ENCODE measurements at regions of chr7 and their contacts with region 1.

Region 1: GRCh38 chr7:22559829-22560489 is 60.0 kb upstream of the STEAP1B start:
- DNase-seq: peak; percentile 24 to 77 (median 57)
- ATAC-seq: peak; percentile 88
- H3K4me3 ChIP-seq: no peak overlapping the region
- H3K4me3 Mint-ChIP-seq: no peak overlapping the region
- H3K27ac ChIP-seq: no peak overlapping the region
- H3K27ac Mint-ChIP-seq: no peak overlapping the region
- H3K4me1 ChIP-seq: peaks cover 22% of the 10 kb centered on the region
- H3K4me1 Mint-ChIP-seq: peaks cover 26% of the 10 kb centered on the region
- H3K27me3 ChIP-seq: peaks cover 0 to 4% of the 10 kb centered on the region in 2 experiments
- H3K27me3 Mint-ChIP-seq: peaks cover 18% of the 10 kb centered on the region
- CTCF ChIP-seq: peak; percentile 63

Region 2: GRCh38 chr7:22726345-22727185 is 166.6 kb after region 1 on chr7:
- CTCF ChIA-PET with region 1: interaction called, 95 read pairs
- POLR2A ChIA-PET with region 1: no interaction called
- intact Hi-C with region 1: loop called (anchors 1 kb)
- DNase-seq: peak in 7 of 9 experiments; percentile 6 to 64 (median 38)
- ATAC-seq: peak; percentile 83
- H3K4me3 ChIP-seq: no peak overlapping the region
- H3K4me3 Mint-ChIP-seq: peak overlapping the region; percentile 64
- H3K27ac ChIP-seq: no peak overlapping the region
- H3K27ac Mint-ChIP-seq: no peak overlapping the region
- H3K4me1 ChIP-seq: peaks cover 9% of the 10 kb centered on the region
- H3K4me1 Mint-ChIP-seq: peaks cover 22% of the 10 kb centered on the region
- H3K27me3 ChIP-seq: peaks cover 0 to 14% of the 10 kb centered on the region in 2 experiments
- H3K27me3 Mint-ChIP-seq: peaks cover 33% of the 10 kb centered on the region
- CTCF ChIP-seq: no peak

Region 3: GRCh38 chr7:22782616-22783232 is 222.8 kb after region 1 on chr7:
- CTCF ChIA-PET with region 1: interaction called, 12 read pairs
- POLR2A ChIA-PET with region 1: no interaction called
- intact Hi-C with region 1: loop called (anchors 1 to 5 kb)
- DNase-seq: peak; percentile 45 to 75 (median 65)
- ATAC-seq: peak; percentile 67
- H3K4me3 ChIP-seq: no peak overlapping the region
- H3K4me3 Mint-ChIP-seq: no peak overlapping the region
- H3K27ac ChIP-seq: no peak overlapping the region
- H3K27ac Mint-ChIP-seq: no peak overlapping the region
- H3K4me1 ChIP-seq: no peaks in the 10 kb centered on the region
- H3K4me1 Mint-ChIP-seq: no peaks in the 10 kb centered on the region
- H3K27me3 ChIP-seq: no peaks in the 10 kb centered on the region
- H3K27me3 Mint-ChIP-seq: peaks cover 7% of the 10 kb centered on the region
- CTCF ChIP-seq: peak; percentile 75

Region 4: GRCh38 chr7:22860784-22861482 is 301.0 kb after region 1 on chr7:
- CTCF ChIA-PET with region 1: no interaction called
- POLR2A ChIA-PET with region 1: no interaction called
- intact Hi-C with region 1: loop called in 1 of 2 experiments (anchors 2 kb)
- DNase-seq: peak in 3 of 9 experiments; percentile 15 to 46 (median 29)
- ATAC-seq: peak; percentile 77
- H3K4me3 ChIP-seq: no peak overlapping the region
- H3K4me3 Mint-ChIP-seq: no peak overlapping the region
- H3K27ac ChIP-seq: no peak overlapping the region
- H3K27ac Mint-ChIP-seq: no peak overlapping the region
- H3K4me1 ChIP-seq: no peaks in the 10 kb centered on the region
- H3K4me1 Mint-ChIP-seq: peaks cover 8% of the 10 kb centered on the region
- H3K27me3 ChIP-seq: no peaks in the 10 kb centered on the region
- H3K27me3 Mint-ChIP-seq: no peaks in the 10 kb centered on the region
- CTCF ChIP-seq: peak; percentile 70

Region 5: GRCh38 chr7:23205909-23206767 is 646.2 kb after region 1 on chr7:
- CTCF ChIA-PET with region 1: no interaction called
- POLR2A ChIA-PET with region 1: no interaction called
- intact Hi-C with region 1: no loop called
- DNase-seq: peak in 3 of 9 experiments; percentile 5 to 28 (median 21)
- ATAC-seq: peak; percentile 74
- H3K4me3 ChIP-seq: no peak overlapping the region
- H3K4me3 Mint-ChIP-seq: peak overlapping the region; percentile 55
- H3K27ac ChIP-seq: peak overlapping the region in 1 of 2 experiments; percentile 18
- H3K27ac Mint-ChIP-seq: peak overlapping the region; percentile 81
- H3K4me1 ChIP-seq: no peaks in the 10 kb centered on the region
- H3K4me1 Mint-ChIP-seq: peaks cover 9% of the 10 kb centered on the region
- H3K27me3 ChIP-seq: no peaks in the 10 kb centered on the region
- H3K27me3 Mint-ChIP-seq: peaks cover 24% of the 10 kb centered on the region
- CTCF ChIP-seq: no peak

Measured in CD8-positive, alpha-beta T cell (primary cell).